Dorsolateral prefrontal cortex (tissue), 120 donors: ENCODE measurements at regions of chr16 and their contacts with region 1.

Region 1: DNA sequence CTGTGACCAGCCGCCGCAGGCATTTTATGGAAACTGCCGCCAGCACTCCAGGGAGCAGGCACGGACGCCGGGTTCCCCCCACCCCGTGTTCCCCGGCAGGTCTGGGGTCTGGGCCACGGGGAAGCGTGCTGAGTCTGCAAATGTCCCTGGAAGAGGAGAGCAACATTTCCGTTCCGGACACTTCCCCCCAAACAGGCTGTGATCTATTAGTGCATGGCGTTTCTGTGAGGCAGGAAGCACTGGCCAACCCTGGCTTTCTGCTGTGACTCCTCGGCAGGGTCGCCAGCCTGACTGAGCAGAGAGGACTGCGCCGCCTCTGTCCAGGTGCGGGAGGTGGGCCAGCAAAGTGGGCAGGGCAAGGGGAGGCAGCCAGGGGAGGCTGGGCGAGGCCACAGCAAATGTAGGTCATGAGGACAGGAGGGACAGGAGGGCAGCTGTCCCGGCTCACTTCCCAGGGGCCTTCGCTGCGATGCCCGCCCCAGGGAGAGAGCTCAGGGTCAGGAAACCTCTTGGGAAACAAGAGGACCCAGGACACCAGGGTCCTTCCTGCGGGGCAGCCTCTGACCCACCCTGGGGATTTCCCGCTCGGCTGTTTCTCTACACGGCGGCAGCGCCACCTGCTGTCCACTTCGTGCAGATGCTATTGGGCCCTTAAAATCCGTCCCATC is 9.5 kb downstream of the FOXF1 start:
- DNase-seq: peak in 7 of 10 donors; percentile 35 to 68 (median 48)
- H3K4me3 ChIP-seq: peak overlapping the region in 1 of 59 donors; percentile 9
- H3K27ac ChIP-seq: no peak overlapping the region
- H3K27me3 ChIP-seq: peaks cover 8 to 76% (median 46%) of the 10 kb centered on the region in 45 donors
- CTCF ChIP-seq: peak; percentile 84 to 98 (median 94)

Region 2: DNA sequence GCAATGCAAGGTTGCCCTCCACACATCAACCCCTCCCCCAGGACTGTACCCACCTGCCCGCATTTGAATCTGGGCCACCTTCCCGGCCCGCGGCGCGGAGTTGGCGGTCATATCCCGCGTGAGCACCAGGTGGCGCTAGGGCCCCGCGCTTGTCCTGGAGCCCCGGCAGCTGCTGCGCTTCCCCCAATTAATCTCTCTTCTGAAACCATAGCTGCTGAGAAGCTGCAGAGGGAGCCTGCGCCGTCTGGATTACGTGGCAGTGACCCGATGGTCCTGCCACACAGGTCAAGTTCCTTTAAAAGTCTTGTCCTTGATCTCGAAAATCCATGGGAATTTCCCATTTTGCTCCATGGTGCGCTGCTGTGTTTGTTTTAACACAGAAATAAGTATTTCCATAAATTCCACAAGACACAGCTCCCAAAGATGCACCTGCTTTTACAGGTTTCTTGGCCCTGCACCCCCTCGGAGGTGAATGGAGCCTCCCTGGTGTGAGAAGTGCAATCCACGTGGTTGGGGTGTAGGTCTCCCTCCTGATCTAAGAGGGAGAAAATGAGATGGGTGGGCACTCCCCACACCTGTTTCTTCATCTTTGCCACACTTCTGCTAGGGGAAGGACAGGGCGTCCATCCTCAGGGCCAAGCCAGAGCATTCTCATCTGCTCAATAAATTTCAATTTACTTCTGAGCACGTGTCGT is 698.2 kb before region 1 on chr16:
- intact Hi-C with region 1: loop called (anchors 2 kb)
- DNase-seq: peak; percentile 62 to 84 (median 70)
- H3K4me3 ChIP-seq: no peak overlapping the region
- H3K27ac ChIP-seq: no peak overlapping the region
- H3K27me3 ChIP-seq: peaks cover 0 to 31% (median 8%) of the 10 kb centered on the region in 45 donors
- CTCF ChIP-seq: peak; percentile 90 to 100 (median 99)

Region 3: GRCh38 chr16:86072328-86073102 is 447.3 kb before region 1 on chr16:
- intact Hi-C with region 1: loop called (anchors 1 to 5 kb)
- DNase-seq: peak in 9 of 10 donors; percentile 33 to 75 (median 69)
- H3K4me3 ChIP-seq: no peak overlapping the region
- H3K27ac ChIP-seq: no peak overlapping the region
- H3K27me3 ChIP-seq: peaks cover 0 to 24% (median 5%) of the 10 kb centered on the region in 45 donors
- CTCF ChIP-seq: peak; percentile 65 to 92 (median 84)

Region 4: GRCh38 chr16:86242244-86243122 is 277.3 kb before region 1 on chr16:
- intact Hi-C with region 1: no loop called
- DNase-seq: no peak
- H3K4me3 ChIP-seq: no peak overlapping the region
- H3K27ac ChIP-seq: no peak overlapping the region
- H3K27me3 ChIP-seq: peaks cover 0 to 77% (median 17%) of the 10 kb centered on the region in 45 donors
- CTCF ChIP-seq: no peak

Region 5: DNA sequence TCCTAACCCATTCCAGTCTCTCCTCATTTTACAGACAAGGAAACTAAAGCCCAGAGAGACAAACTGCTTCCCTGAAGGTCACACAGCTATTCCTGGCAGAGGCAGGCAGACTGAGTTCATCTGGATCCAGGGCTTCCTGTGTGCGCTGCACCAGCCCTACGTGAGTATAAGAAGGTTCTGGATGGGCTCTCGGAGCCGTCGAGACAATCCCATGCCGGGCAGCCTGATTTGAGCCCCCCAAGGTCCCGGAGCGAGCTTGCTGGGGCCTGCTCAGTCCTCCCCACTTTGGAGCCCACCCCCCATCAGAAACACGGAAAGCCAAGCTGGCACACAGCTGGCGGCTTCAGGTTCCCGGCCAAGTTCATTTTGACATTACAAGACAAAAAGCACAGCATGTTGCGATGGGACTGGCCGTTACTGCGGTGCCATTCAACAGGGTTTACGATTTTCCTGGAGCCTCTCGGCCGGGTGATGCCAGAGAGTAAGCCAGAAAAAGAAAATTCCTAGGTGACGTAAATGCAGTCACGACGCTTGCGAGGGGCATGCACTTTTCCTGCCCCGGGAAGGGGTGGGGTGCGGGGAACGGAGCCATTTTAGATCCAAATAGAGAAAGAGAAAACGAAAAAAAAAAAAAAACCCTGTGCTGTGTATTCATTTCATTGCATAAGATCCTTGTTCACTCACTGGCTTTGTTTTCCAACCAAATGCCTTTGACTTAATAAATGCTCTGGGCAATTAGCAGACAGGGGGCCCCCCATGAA is 176.6 kb before region 1 on chr16:
- intact Hi-C with region 1: loop called (anchors 2 kb)
- DNase-seq: peak in 1 of 10 donors; percentile 5
- H3K4me3 ChIP-seq: peak overlapping the region in 7 of 59 donors; percentile 11 to 27 (median 22)
- H3K27ac ChIP-seq: peak overlapping the region in 38 of 59 donors; percentile 10 to 85 (median 62)
- H3K27me3 ChIP-seq: peaks cover 0 to 78% (median 38%) of the 10 kb centered on the region in 45 donors
- CTCF ChIP-seq: no peak

Region 6: GRCh38 chr16:86498661-86499439 is 20.9 kb before region 1 on chr16:
- intact Hi-C with region 1: no loop called
- DNase-seq: no peak
- H3K4me3 ChIP-seq: peak overlapping the region in 4 of 59 donors; percentile 7 to 20 (median 14)
- H3K27ac ChIP-seq: no peak overlapping the region
- H3K27me3 ChIP-seq: peaks cover 39 to 100% (median 100%) of the 10 kb centered on the region in 45 donors
- CTCF ChIP-seq: no peak